Activated naive CD4-positive, alpha-beta T cell treated with anti-CD3 and anti-CD28 coated beads for 36 hours (primary cell): ENCODE measurements at regions of chr15 and their contacts with region 1.

Region 1: DNA sequence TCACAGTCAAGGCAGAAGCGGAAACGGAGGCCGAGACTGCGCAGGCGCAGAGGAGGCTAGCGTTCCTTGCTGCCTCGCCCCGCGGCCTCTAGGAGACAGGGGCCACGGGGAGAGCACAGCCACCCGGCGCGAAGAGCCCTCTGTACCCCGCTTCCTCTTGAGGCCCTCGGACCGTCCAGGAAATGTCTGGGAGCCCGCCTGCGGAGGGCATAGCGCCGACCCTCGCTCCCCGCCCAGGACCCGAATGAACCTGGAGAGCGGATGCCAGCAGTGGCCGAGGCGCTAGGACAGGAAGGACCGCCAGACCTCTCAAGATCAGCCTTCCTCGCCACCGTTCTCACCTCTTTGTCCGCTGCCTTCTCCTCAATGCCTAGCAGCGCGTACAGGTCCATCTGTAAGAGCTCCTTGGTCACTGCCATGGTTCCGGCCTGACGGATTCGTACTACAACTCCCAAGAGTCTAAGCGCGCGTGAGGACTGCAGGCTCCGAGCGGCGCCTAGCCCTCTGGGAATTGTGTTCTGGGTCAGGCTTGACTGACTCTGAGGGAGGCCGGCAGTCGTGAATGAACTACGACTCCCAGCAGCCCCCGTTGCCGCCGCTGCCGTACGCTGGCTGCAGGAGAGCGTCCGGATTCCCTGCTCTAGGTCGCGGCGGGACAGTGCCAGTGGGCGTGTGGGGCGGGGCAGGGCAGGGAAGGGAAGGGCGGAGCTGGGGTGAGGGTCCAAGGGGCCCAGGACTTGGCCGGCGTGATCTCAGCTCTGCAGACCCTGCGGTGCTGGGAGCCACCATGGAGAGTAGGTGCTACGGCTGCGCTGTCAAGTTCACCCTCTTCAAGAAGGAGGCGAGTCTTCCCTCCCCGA is at the starts of genes DNAJC17 and ZFYVE19:
- DNase-seq: peak; percentile 97
- H3K4me3 Mint-ChIP-seq: peak within 1 kb of the TSS; percentile 86
- H3K27ac Mint-ChIP-seq: peak within 1 kb of the TSS; percentile 93
- H3K4me1 Mint-ChIP-seq: peaks cover 23% of the 10 kb centered on the region
- H3K27me3 Mint-ChIP-seq: no peaks in the 10 kb centered on the region
- total RNA-seq, gene DNAJC17: 25.9 to 28.1 TPM
- total RNA-seq, gene ZFYVE19: 15.4 to 17.0 TPM

Region 2: DNA sequence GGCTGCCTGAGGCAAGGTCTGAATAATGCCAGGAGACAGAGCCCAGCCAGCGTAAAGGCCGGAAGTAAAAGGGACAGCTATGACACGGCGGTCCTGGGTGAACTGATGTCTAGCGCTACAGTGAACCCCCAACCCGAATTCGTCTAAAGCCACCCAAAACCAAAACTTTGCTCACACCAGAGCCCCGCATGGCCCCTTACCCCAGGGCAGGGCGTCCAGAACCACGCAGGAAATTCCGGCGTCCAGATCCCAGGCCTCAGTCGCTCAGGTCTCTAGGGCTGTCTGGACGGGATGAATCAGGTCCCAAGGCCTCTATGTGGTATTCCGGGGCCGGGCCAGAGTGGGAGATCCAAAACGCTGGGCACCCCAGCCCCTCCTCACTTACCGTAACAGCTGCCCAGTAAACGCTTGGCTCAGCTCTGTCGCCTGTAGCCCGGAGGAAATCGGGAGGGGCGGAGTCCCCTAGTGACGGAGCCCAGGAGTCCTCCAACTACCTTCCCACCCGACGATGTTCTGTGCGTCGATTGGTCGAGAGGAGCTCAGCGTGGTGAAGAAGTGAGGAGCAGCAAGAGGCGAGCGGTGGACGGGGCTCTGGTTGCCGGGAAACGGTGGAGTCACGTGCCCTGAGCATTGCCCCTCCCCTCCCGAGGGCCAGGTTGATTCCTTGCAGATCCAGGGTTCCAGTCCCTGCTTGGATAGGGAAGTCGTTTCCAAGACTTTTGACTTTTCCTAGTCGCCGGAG is 242.5 kb before region 1 on chr15 and contains the start of gene CCDC32:
- CTCF ChIA-PET with region 1: no interaction called
- intact Hi-C with region 1: loop called (anchors 1 kb)
- DNase-seq: peak; percentile 98
- H3K4me3 Mint-ChIP-seq: peak within 1 kb of the TSS; percentile 96
- H3K27ac Mint-ChIP-seq: peak within 1 kb of the TSS; percentile 90
- H3K4me1 Mint-ChIP-seq: peaks cover 45% of the 10 kb centered on the region
- H3K27me3 Mint-ChIP-seq: no peaks in the 10 kb centered on the region
- total RNA-seq, gene CCDC32: 25.4 to 25.8 TPM

Region 3: GRCh38 chr15:40694688-40695468 is 112.4 kb before region 1 on chr15 and contains the start of gene RAD51:
- CTCF ChIA-PET with region 1: no interaction called
- intact Hi-C with region 1: loop called (anchors 1 kb)
- DNase-seq: peak; percentile 96
- H3K4me3 Mint-ChIP-seq: peak within 1 kb of the TSS; percentile 99
- H3K27ac Mint-ChIP-seq: peak within 1 kb of the TSS; percentile 99
- H3K4me1 Mint-ChIP-seq: peaks cover 25% of the 10 kb centered on the region
- H3K27me3 Mint-ChIP-seq: no peaks in the 10 kb centered on the region
- total RNA-seq, gene RAD51: 65.8 to 68.8 TPM

Region 4: GRCh38 chr15:40763801-40764732 is 43.2 kb before region 1 on chr15 and contains the start of gene GCHFR:
- CTCF ChIA-PET with region 1: no interaction called
- intact Hi-C with region 1: loop called (anchors 1 kb)
- DNase-seq: peak; percentile 75
- H3K4me3 Mint-ChIP-seq: peak within 1 kb of the TSS; percentile 83
- H3K27ac Mint-ChIP-seq: peak within 1 kb of the TSS; percentile 70
- H3K4me1 Mint-ChIP-seq: peaks cover 37% of the 10 kb centered on the region
- H3K27me3 Mint-ChIP-seq: no peaks in the 10 kb centered on the region
- total RNA-seq, gene GCHFR: 28.1 to 32.7 TPM

Region 5: DNA sequence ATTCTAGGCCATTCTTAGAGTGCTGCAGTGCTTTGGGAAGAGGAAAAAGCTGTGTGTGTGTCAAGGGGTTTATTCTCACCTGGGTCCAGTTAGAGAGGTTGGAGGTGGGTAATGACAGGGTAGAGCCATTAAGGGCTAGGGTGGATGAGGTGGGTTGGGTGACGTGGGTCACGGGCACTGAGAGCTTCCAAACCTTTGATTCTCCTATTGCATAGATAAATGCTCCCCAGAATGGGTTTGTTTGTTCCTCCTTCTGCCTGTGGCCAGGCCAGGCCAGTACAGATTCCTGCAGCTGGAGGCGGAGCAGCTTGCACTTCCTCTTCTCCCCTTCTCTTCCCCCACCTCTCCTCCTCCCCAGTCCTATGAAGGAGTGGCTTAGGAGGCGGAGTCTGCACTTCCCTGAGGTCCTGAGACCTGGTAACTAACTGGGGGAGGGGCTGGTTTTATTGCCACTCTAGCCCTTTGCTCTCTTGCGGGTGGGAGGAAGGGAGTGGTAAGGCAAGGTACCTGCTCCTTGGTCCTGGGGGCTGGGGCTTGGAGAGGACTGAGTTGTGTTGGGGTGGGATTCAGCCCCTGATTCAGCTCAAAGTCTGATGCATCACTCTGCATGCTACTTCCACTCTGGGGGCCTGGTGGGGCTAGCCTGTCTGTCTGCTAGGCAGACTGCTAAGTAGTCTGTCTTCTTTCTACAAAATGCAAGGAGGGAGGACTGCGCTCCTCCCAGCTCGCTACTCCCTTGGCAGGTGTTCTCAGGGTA is 40.1 kb after region 1 on chr15:
- CTCF ChIA-PET with region 1: no interaction called
- intact Hi-C with region 1: loop called (anchors 1 kb)
- DNase-seq: no peak
- H3K4me3 Mint-ChIP-seq: no peak overlapping the region
- H3K27ac Mint-ChIP-seq: no peak overlapping the region
- H3K4me1 Mint-ChIP-seq: peaks cover 21% of the 10 kb centered on the region
- H3K27me3 Mint-ChIP-seq: peaks cover 8% of the 10 kb centered on the region

Region 6: DNA sequence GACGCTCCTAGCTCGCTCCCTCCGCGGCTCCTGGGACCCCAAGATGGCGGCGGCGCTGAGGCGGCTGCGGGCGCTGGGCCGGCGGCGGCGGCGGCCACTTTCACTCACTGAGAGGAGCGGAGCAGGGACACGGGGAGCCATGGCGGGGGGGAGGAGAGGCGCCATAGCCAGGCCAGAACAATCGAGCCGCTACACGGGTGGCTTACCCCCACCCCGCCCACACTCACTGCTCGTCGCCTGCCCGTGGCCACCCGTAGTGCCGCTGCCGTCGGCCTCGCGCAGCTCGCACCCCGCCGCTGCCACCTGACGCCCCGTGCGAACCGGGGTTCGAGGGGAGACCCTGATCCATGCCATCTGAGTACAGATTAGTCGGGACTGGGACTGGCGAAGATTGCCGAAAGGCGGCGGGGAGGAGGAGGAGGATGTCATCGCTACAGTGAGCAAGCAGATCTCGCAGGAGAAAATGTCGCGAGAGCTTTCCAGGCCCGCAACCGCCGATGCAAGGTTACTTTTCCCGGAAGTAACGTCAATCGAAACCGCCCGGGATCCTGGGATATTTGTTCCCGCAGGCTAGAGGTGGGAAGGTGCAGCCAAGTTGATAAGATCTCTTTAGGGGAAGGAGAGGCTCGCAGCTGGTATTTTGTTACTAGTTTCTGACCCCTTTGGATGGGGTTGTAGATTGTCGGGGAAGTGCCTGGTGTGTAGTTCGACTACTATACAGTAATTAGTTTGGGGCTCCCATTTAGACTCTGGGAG is 309.0 kb after region 1 on chr15 and contains the start of gene INO80:
- CTCF ChIA-PET with region 1: no interaction called
- intact Hi-C with region 1: loop called (anchors 1 kb)
- DNase-seq: peak; percentile 99
- H3K4me3 Mint-ChIP-seq: peak within 1 kb of the TSS; percentile 88
- H3K27ac Mint-ChIP-seq: peak within 1 kb of the TSS; percentile 96
- H3K4me1 Mint-ChIP-seq: peaks cover 21% of the 10 kb centered on the region
- H3K27me3 Mint-ChIP-seq: no peaks in the 10 kb centered on the region
- total RNA-seq, gene INO80: 14.0 to 16.8 TPM

Region 7: GRCh38 chr15:41331833-41332787 is 524.9 kb after region 1 on chr15 and contains the start of gene OIP5:
- CTCF ChIA-PET with region 1: no interaction called
- intact Hi-C with region 1: loop called (anchors 1 kb)
- DNase-seq: peak; percentile 100
- H3K4me3 Mint-ChIP-seq: peak within 1 kb of the TSS; percentile 100
- H3K27ac Mint-ChIP-seq: peak within 1 kb of the TSS; percentile 98
- H3K4me1 Mint-ChIP-seq: peaks cover 26% of the 10 kb centered on the region
- H3K27me3 Mint-ChIP-seq: no peaks in the 10 kb centered on the region
- total RNA-seq, gene OIP5: 9.5 to 10.7 TPM